ENCODE measurements at regions of chr2 and their contacts with region 1.

Region 1: DNA sequence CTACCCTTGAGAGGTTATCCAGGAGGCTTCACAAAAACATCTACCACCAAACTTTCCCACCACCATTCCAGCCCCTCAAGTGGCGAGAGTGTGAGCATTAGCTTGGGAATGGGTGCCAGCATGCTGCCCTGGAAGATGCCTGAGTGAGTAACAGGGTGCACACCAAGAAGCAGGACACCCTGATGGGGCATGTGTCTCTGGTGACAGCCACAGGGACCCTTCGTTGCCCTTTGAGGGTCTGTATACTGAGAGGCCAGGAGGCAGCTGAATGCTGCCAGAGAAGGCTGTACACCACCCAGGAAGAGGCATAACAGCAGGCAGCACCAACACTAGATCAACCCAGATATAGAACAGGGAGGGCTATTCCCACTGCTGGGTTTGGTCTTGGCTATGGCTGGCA is 233.6 kb upstream of the THSD7B start:
- DNase-seq: no peak
- ATAC-seq: no peak
- H3K4me3 ChIP-seq: no peak overlapping the region
- H3K27ac ChIP-seq: no peak overlapping the region
- H3K4me1 ChIP-seq: no peaks in the 10 kb centered on the region
- H3K27me3 ChIP-seq: no peaks in the 10 kb centered on the region
- CTCF ChIP-seq: no peak
- EP300 ChIP-seq: no peak
- POLR2A ChIP-seq: no peak
- RAD21 ChIP-seq: no peak

Region 2: GRCh38 chr2:136557203-136557602 is 25.5 kb after region 1 on chr2:
- CTCF ChIA-PET with region 1: no interaction called
- POLR2A ChIA-PET with region 1: no interaction called
- in situ Hi-C with region 1: no loop called
- intact Hi-C with region 1: loop called (anchors 1 kb)
- DNase-seq: no peak
- ATAC-seq: no peak
- H3K4me3 ChIP-seq: no peak overlapping the region
- H3K27ac ChIP-seq: no peak overlapping the region
- H3K4me1 ChIP-seq: no peaks in the 10 kb centered on the region
- H3K27me3 ChIP-seq: no peaks in the 10 kb centered on the region
- CTCF ChIP-seq: no peak
- EP300 ChIP-seq: no peak
- POLR2A ChIP-seq: no peak
- RAD21 ChIP-seq: no peak

Measured in HepG2 (cell line).